Ovary (tissue), 10 donors: ENCODE measurements at regions of chr2 and their contacts with region 1.

Region 1: GRCh38 chr2:84925724-84926376 is 20.4 kb downstream of the TMSB10 start:
- DNase-seq: peak; percentile 89 to 94 (median 92)
- H3K4me3 ChIP-seq: peak overlapping the region; percentile 28
- H3K27ac ChIP-seq: no peak overlapping the region
- H3K4me1 ChIP-seq: peaks cover 9% of the 10 kb centered on the region
- H3K27me3 ChIP-seq: no peaks in the 10 kb centered on the region
- CTCF ChIP-seq: peak; percentile 91 to 93 (median 92)
- EP300 ChIP-seq: no peak
- POLR2A ChIP-seq: no peak

Region 2: DNA sequence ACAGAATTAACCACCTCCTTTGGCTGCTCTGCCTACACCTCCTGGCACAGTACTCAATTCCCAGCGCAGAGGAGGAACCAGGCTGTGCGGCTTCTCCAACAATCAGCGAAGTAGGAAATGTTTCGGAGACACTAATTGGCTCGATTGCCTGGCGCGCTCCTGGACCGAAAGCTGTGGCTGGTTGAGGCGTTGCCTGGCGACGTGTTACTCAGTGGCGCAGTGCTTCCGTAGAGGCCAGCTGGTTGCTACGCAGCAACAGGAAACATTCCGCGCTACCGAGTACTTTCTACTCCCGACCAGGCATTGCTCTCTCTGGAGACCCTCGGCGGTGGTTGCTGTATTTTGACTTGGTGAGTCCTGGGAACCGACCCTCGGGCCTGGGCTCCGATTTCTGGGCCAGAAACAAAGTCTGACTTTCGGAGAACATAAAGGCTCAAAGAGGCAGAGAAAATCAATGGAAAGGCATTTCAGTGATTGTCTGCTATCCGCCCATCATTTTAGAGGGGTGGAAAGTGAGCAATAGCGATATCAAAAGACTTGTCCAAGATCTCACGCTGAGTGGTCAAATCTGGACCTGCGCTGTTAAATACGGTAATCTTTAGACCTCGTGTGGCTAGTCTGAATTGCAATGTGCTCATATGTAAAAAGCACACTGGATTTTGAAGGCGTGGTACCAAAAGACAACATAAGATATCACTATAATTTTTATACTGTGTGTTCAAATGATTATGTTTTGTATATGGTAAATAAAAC is 409.4 kb before region 1 on chr2 and contains the start of gene DNAH6:
- intact Hi-C with region 1: loop called in 1 of 4 experiments (anchors 5 kb)
- DNase-seq: peak; percentile 90 to 96 (median 92)
- H3K4me3 ChIP-seq: peak within 1 kb of the TSS; percentile 49
- H3K27ac ChIP-seq: no peak within 1 kb of the TSS
- H3K4me1 ChIP-seq: no peaks in the 10 kb centered on the region
- H3K27me3 ChIP-seq: no peaks in the 10 kb centered on the region
- CTCF ChIP-seq: no peak
- EP300 ChIP-seq: no peak
- POLR2A ChIP-seq: no peak
- total RNA-seq, gene DNAH6: 0.88 to 14.0 (median 2.5) TPM